Common myeloid progenitor, CD34-positive (primary cell): ENCODE measurements at regions of chr7 and their contacts with region 1.

Region 1: DNA sequence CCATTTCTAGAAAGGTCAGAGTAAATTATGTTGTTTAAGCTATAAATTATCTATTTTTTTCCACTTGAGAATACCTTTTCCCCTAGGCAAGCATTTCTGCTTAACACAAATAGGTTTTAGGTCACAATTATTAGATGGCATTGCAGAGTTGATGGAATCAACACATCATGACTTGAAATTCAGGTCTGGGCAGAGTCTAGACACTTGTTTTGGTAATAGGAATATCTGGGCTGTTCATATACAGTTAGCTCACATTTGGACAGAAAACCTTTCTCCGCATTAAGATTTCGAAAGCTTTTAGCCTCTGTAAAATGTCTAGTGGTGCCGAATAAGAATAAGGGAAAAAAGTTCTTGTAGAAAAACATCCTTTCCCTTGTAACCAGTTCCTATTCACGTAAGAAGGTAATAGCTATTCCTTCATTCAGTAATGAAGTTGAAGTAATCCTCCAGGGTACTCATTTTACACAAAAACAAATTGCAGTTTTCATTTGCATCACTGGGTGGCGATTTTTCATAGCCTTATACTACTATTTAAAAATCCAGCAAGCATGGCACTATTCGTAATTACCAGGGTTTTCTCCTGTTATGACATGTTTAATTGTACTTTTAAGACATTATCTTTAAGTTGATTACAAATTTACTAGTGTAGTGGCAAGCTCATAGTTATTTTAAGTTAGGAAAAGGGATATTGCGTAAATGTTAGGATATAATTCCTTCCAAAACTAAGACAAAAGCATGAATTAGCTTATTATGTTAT is 37.0 kb downstream of the RPA3 start:
- DNase-seq: peak; percentile 78 to 86 (median 85)
- H3K4me3 ChIP-seq: peak overlapping the region in 2 of 7 experiments; percentile 22 to 38
- H3K27ac ChIP-seq: peak overlapping the region; percentile 48 to 66
- H3K4me1 ChIP-seq: peaks cover 0 to 13% (median 2%) of the 10 kb centered on the region in 4 experiments
- H3K27me3 ChIP-seq: no peaks in the 10 kb centered on the region

Region 2: DNA sequence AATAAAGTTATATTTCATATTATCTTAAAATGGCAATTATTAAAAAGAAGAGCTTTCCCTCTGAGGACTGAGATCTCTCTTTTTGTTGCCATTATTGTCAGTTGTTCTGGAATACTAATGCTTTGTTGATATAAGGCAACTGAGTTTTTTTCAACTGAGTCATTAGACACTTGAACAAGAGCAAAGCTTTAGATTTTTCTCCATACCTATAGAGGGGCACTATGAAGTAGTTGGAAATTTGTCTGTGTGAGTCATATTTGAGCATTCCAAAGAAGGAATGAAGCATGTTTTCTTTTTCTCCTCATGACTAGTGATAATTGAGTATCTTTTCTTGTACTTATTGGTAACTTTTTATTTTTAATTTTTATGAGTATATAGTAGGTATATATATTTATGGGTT is 12.5 kb after region 1 on chr7:
- CTCF ChIA-PET with region 1: interaction called, 29 read pairs
- POLR2A ChIA-PET with region 1: no interaction called
- DNase-seq: no peak
- H3K4me3 ChIP-seq: no peak overlapping the region
- H3K27ac ChIP-seq: no peak overlapping the region
- H3K4me1 ChIP-seq: peaks cover 7 to 23% (median 14%) of the 10 kb centered on the region in 4 experiments
- H3K27me3 ChIP-seq: no peaks in the 10 kb centered on the region

Region 3: DNA sequence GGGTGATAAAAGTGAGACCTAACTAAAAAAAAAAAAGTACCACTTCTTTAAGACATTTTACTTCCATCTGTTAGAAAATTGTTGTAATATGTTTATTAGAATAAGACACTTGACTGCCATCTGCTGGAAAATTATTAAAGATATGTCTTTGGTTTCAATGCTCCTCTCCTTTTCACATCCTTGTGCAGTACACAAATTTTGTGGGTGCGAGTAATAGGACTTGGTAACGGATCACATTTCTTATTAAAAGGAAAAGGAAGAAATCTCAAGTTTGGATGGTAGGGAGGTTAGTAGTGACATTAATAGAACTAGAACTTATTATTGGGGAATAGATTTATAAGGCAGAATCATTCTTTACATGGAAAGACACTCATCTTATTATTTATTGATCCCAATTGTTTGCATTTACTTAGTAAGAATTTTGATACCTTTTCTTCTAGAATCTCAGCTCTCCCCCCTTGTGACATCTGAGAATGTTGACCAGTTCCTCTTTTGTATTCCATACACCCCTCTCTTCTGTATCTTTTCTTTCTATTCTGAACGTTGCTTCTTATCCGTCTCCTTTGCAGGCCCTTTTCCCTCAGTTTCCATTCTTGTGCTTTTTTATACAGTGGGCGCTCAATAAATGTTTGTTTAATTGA is 80.1 kb after region 1 on chr7:
- CTCF ChIA-PET with region 1: interaction called, 17 read pairs
- POLR2A ChIA-PET with region 1: no interaction called
- DNase-seq: peak; percentile 61 to 80 (median 77)
- H3K4me3 ChIP-seq: peak overlapping the region in 6 of 7 experiments; percentile 59 to 97 (median 77)
- H3K27ac ChIP-seq: peak overlapping the region; percentile 67 to 80
- H3K4me1 ChIP-seq: peaks cover 0 to 17% (median 8%) of the 10 kb centered on the region in 4 experiments
- H3K27me3 ChIP-seq: no peaks in the 10 kb centered on the region

Region 4: GRCh38 chr7:8217200-8218068 is 536.1 kb after region 1 on chr7:
- CTCF ChIA-PET with region 1: interaction called, 10 read pairs
- POLR2A ChIA-PET with region 1: no interaction called
- DNase-seq: peak; percentile 72 to 91 (median 87)
- H3K4me3 ChIP-seq: no peak overlapping the region
- H3K27ac ChIP-seq: no peak overlapping the region
- H3K4me1 ChIP-seq: no peaks in the 10 kb centered on the region
- H3K27me3 ChIP-seq: no peaks in the 10 kb centered on the region